CD8-positive, alpha-beta T cell (primary cell): ENCODE measurements at regions of chr4 and their contacts with region 1.

Region 1: GRCh38 chr4:2843263-2843940 is at the start of gene ADD1:
- DNase-seq: peak; percentile 84 to 100 (median 96)
- ATAC-seq: peak; percentile 93
- H3K4me3 ChIP-seq: peak within 1 kb of the TSS; percentile 65 to 94
- H3K4me3 Mint-ChIP-seq: peak within 1 kb of the TSS; percentile 94
- H3K27ac ChIP-seq: peak within 1 kb of the TSS; percentile 71 to 78
- H3K27ac Mint-ChIP-seq: peak within 1 kb of the TSS; percentile 95
- H3K4me1 ChIP-seq: peaks cover 42% of the 10 kb centered on the region
- H3K4me1 Mint-ChIP-seq: peaks cover 64% of the 10 kb centered on the region
- H3K27me3 ChIP-seq: no peaks in the 10 kb centered on the region
- H3K27me3 Mint-ChIP-seq: no peaks in the 10 kb centered on the region
- CTCF ChIP-seq: no peak
- total RNA-seq, gene ADD1: 129 TPM

Region 2: GRCh38 chr4:2468445-2469192 is 374.8 kb before region 1 on chr4 and contains the start of gene RNF4:
- CTCF ChIA-PET with region 1: no interaction called
- POLR2A ChIA-PET with region 1: no interaction called
- intact Hi-C with region 1: loop called in 1 of 2 experiments (anchors 5 kb)
- DNase-seq: peak; percentile 90 to 98 (median 94)
- ATAC-seq: peak; percentile 82
- H3K4me3 ChIP-seq: peak within 1 kb of the TSS; percentile 54 to 91
- H3K4me3 Mint-ChIP-seq: peak within 1 kb of the TSS; percentile 96
- H3K27ac ChIP-seq: peak within 1 kb of the TSS; percentile 95 to 97
- H3K27ac Mint-ChIP-seq: peak within 1 kb of the TSS; percentile 98
- H3K4me1 ChIP-seq: peaks cover 42% of the 10 kb centered on the region
- H3K4me1 Mint-ChIP-seq: peaks cover 45% of the 10 kb centered on the region
- H3K27me3 ChIP-seq: no peaks in the 10 kb centered on the region
- H3K27me3 Mint-ChIP-seq: no peaks in the 10 kb centered on the region
- CTCF ChIP-seq: no peak
- total RNA-seq, gene RNF4: 130 to 134 TPM

Region 3: DNA sequence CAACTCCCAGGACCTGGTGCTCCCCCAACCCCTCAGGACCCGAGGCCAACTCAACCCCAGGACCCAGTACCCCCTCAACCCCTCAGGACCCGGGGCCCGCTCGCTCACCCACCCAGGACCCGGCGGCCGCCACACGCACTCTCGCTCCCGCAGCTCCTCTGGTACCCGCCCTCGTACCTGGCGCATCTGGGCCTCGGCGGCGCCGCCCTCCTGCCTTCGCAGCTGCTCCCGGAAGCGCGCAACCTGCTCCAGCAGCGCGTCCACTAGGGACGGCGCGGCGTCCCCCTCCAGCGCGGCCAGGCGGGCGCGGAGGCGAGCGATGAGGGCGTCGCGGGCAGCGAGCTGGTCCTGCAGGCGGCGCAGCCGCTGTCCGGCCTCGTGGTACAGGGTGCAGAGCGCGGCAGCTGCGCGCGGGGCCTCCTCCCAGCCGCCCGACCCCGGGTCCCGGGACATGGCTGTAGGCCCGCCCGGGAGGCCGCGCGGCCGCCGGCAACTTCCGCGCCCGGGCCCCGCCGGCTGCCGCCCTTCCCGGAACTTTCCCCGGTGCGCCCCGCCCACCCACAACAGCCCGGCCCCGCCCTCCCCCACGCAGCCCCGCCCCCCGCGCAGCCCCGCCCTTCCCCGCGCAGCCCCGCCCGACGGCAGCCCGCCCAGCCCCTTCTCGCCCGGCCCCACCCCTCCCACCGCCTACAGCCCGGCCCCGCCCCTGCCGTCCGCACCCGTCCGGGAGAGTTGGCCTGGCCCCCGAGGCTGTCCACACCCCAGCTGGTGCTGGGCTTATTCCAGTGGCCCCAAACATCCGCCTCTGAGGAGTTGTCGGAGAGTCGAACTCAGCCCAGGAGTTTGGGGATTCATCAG is 87.3 kb before region 1 on chr4 and contains the start of gene TNIP2:
- CTCF ChIA-PET with region 1: no interaction called
- POLR2A ChIA-PET with region 1: interaction called, 3 read pairs
- intact Hi-C with region 1: loop called (anchors 1 to 2 kb)
- DNase-seq: peak; percentile 55 to 88 (median 75)
- ATAC-seq: peak; percentile 83
- H3K4me3 ChIP-seq: peak within 1 kb of the TSS; percentile 57 to 65
- H3K4me3 Mint-ChIP-seq: peak within 1 kb of the TSS; percentile 76
- H3K27ac ChIP-seq: peak within 1 kb of the TSS; percentile 19 to 63
- H3K27ac Mint-ChIP-seq: peak within 1 kb of the TSS; percentile 67
- H3K4me1 ChIP-seq: peaks cover 17% of the 10 kb centered on the region
- H3K4me1 Mint-ChIP-seq: peaks cover 37% of the 10 kb centered on the region
- H3K27me3 ChIP-seq: no peaks in the 10 kb centered on the region
- H3K27me3 Mint-ChIP-seq: no peaks in the 10 kb centered on the region
- CTCF ChIP-seq: peak; percentile 22
- total RNA-seq, gene TNIP2: 50.9 to 56.5 TPM

Region 4: GRCh38 chr4:2800691-2801596 is 42.5 kb before region 1 on chr4:
- CTCF ChIA-PET with region 1: no interaction called
- POLR2A ChIA-PET with region 1: interaction called, 17 read pairs
- intact Hi-C with region 1: loop called in 1 of 2 experiments (anchors 5 kb)
- DNase-seq: peak in 3 of 9 experiments; percentile 14 to 45 (median 21)
- ATAC-seq: no peak
- H3K4me3 ChIP-seq: no peak overlapping the region
- H3K4me3 Mint-ChIP-seq: peak overlapping the region; percentile 22
- H3K27ac ChIP-seq: no peak overlapping the region
- H3K27ac Mint-ChIP-seq: no peak overlapping the region
- H3K4me1 ChIP-seq: peaks cover 47% of the 10 kb centered on the region
- H3K4me1 Mint-ChIP-seq: peaks cover 33% of the 10 kb centered on the region
- H3K27me3 ChIP-seq: no peaks in the 10 kb centered on the region
- H3K27me3 Mint-ChIP-seq: no peaks in the 10 kb centered on the region
- CTCF ChIP-seq: no peak

Region 5: DNA sequence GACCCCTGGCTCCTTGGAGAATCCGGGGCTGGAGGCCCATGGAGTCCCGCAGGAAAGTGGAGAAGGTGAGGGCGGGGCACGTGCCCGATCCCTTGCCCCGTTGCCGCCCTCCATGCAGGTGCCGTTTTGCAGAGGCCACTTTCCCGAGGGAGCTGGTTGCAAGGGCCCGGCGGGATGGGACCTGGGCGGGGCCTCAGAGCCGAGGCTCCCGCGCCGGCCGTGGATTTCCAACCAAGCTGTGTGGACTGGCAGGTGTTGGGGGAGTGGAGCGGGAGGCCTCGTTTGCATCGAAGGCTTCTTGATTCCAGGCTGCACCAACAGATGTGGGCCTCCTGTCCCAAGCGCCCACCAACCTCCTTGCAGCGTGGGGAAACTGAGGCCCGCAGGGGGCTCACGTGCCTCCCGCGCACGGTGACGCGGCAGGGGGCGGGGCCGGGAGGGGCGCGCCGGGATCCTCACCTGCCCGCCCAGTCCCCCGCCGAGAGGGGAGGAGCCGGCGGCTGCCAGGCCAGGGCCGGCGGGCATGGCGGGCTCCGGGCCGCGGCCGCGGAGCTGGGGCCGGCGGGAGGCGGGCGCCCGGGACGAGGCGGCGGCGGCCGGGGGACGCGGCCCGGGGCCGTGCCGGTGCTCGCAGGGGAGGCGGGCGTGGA is 25.6 kb before region 1 on chr4:
- CTCF ChIA-PET with region 1: no interaction called
- POLR2A ChIA-PET with region 1: interaction called, 11 read pairs
- intact Hi-C with region 1: loop called in 1 of 2 experiments (anchors 2 kb)
- DNase-seq: peak in 5 of 9 experiments; percentile 28 to 64 (median 52)
- ATAC-seq: peak; percentile 55
- H3K4me3 ChIP-seq: peak overlapping the region; percentile 39 to 45
- H3K4me3 Mint-ChIP-seq: peak overlapping the region; percentile 87
- H3K27ac ChIP-seq: peak overlapping the region in 1 of 2 experiments; percentile 37
- H3K27ac Mint-ChIP-seq: no peak overlapping the region
- H3K4me1 ChIP-seq: peaks cover 57% of the 10 kb centered on the region
- H3K4me1 Mint-ChIP-seq: peaks cover 63% of the 10 kb centered on the region
- H3K27me3 ChIP-seq: no peaks in the 10 kb centered on the region
- H3K27me3 Mint-ChIP-seq: no peaks in the 10 kb centered on the region
- CTCF ChIP-seq: no peak

Region 6: DNA sequence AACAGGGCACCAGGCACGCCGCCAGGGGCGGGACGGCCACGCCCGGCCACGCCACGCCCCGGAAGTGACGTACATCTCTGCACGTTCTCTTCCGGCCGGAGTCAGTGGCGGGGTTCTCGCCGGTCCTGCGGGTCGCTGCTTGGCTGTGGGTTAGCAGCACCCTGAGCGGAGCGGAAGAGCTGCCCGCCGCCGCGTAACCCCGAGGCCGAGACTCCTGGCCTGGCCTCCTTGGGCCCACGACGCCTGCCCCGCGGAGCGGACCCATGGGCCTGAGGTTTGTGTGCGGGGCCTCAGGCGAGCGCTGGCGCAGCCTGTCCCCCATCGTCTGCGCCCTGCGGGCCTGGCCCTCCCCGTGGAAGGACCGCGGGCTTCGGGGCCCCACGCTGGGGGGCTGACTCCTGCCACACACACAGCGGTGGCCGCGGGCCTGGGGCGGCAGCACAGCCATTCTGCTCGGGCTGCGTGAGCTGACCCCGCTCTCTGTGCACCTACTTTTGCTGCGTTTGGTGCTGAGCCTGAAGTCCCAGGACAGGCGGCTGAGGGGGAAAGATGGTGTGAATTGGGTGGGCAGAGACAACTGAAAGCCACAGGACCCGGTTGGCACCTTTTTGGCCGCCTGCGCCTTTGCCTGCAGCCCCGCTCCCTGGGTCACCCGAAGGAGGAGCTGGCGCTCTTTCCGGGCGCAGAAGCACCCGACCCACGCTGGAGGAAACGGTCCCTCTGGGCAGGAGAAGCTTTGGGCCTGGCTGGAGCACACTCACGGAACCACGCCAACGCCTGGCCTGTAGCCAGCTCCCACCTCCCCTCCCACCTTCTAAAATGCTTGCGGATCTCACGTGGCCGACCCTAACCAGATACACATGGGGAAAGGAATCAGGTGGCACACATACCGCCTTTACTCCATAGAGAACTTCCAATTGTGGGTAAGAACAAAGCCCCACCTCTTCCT is 91.7 kb after region 1 on chr4:
- CTCF ChIA-PET with region 1: no interaction called
- POLR2A ChIA-PET with region 1: interaction called, 7 read pairs
- intact Hi-C with region 1: loop called (anchors 1 to 5 kb)
- DNase-seq: peak; percentile 91 to 99 (median 97)
- ATAC-seq: peak; percentile 55
- H3K4me3 ChIP-seq: peak overlapping the region; percentile 71 to 95
- H3K4me3 Mint-ChIP-seq: peak overlapping the region; percentile 85
- H3K27ac ChIP-seq: peak overlapping the region; percentile 94 to 96
- H3K27ac Mint-ChIP-seq: peak overlapping the region; percentile 90
- H3K4me1 ChIP-seq: peaks cover 55% of the 10 kb centered on the region
- H3K4me1 Mint-ChIP-seq: peaks cover 46% of the 10 kb centered on the region
- H3K27me3 ChIP-seq: no peaks in the 10 kb centered on the region
- H3K27me3 Mint-ChIP-seq: no peaks in the 10 kb centered on the region
- CTCF ChIP-seq: no peak